Vagina (tissue), 2 donors: ENCODE measurements at regions of chr19 and their contacts with region 1.

Region 1: GRCh38 chr19:43562698-43563241 is 12.6 kb downstream of the XRCC1 start:
- DNase-seq: no peak
- H3K4me3 ChIP-seq: no peak overlapping the region
- H3K27ac ChIP-seq: peak overlapping the region; percentile 32
- H3K4me1 ChIP-seq: peaks cover 9% of the 10 kb centered on the region
- H3K27me3 ChIP-seq: no peaks in the 10 kb centered on the region
- CTCF ChIP-seq: no peak
- POLR2A ChIP-seq: no peak

Region 2: DNA sequence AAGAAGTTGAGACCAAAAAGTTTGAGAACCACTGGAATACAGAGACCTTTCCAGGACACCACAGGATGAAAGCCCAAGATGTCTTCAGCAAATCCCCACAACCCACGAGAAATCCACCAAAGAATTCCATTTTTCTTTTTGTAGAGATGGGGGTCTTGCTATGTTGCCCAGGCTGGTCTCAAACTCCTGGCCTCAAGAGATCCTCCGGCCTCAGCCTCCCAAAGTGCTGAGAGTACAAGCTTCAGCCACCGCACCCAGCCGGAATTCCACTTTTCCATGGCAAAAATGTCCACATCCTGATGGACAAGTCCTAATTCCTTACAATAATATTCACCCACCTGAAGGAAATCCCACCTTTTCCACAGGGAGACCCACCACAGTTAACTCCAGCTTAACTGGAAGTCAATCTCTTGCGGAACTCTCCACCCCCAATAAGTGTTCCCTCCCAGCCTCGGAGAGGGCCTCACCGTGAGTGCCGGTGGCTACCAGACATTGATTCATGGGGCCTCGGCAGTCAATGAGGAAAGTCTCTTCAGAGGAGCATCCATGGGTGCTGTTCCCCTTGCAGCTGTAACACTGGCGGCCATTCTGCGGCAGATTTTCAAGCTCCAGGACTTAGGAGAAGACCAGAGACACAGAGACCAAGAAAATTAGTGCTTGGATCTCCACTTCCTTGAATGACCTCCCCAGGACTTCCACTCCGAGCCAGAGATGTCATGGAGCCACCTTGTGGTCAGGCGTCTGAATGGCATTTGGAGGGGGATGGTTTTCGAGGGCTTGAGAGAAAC is 89.2 kb after region 1 on chr19:
- intact Hi-C with region 1: loop called (anchors 10 kb)
- DNase-seq: no peak
- H3K4me3 ChIP-seq: no peak overlapping the region
- H3K27ac ChIP-seq: no peak overlapping the region
- H3K4me1 ChIP-seq: no peaks in the 10 kb centered on the region
- H3K27me3 ChIP-seq: no peaks in the 10 kb centered on the region
- CTCF ChIP-seq: peak; percentile 40 to 56 (median 53)
- POLR2A ChIP-seq: no peak

Region 3: DNA sequence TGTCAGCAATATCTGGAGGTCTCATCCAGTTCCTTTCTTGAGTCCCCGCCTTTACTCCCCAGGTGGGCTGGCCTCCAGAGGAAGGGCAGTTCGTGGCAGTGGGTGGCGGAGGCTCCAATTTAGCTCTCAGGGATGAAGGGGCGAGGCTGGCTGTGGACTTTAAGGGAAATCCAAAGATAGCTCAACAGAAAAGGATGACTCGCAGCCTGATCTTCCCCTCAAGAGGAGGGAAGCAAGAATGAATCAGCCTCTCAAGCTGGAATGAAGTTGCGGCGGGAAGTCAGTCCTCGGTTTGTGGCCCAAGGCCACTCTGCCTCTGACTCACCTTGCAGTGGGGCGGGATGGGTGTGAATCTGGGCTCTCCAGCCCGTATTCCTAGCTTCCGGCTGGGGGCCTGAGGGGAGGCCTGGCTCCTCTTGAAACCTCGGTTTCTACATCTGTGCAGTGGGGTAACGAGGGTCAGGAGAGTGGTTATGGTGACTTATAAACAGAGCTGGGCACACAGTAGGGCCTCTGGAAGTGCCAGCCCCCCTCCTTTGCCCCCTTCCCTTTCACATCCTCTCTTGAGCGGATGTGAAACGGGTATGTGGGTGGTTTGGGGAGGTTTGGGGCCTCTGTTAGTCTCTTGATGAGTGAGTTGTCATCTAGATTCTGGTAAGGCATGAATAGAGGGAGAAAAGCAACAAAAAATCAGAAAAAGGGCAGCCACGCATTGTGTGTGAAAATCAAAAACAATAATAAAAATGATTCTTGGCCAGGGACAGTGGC is 202.5 kb after region 1 on chr19:
- intact Hi-C with region 1: no loop called
- DNase-seq: no peak
- H3K4me3 ChIP-seq: no peak overlapping the region
- H3K27ac ChIP-seq: peak overlapping the region; percentile 53
- H3K4me1 ChIP-seq: peaks cover 16% of the 10 kb centered on the region
- H3K27me3 ChIP-seq: no peaks in the 10 kb centered on the region
- CTCF ChIP-seq: no peak
- POLR2A ChIP-seq: no peak